K562 (cell line): ENCODE measurements at regions of chr2 and their contacts with region 1.

Region 1: GRCh38 chr2:85954590-85955458 is 66.0 kb upstream of the ST3GAL5 start:
- DNase-seq: no peak
- ATAC-seq: no peak
- H3K4me3 ChIP-seq: no peak overlapping the region
- H3K27ac ChIP-seq: no peak overlapping the region; the same call in 2 of the 3 replicates
- H3K4me1 ChIP-seq: peaks cover 22 to 24% of the 10 kb centered on the region in 2 experiments
- H3K27me3 ChIP-seq: no peaks in the 10 kb centered on the region
- CTCF ChIP-seq: no peak
- EP300 ChIP-seq: no peak
- POLR2A ChIP-seq: no peak
- RAD21 ChIP-seq: no peak

Region 2: GRCh38 chr2:85935746-85936208 is 19.0 kb before region 1 on chr2:
- CTCF ChIA-PET with region 1: no interaction called
- POLR2A ChIA-PET with region 1: no interaction called
- in situ Hi-C with region 1: no loop called
- intact Hi-C with region 1: loop called (anchors 2 kb)
- DNase-seq: peak in 1 of 4 experiments; percentile 53
- ATAC-seq: no peak
- H3K4me3 ChIP-seq: no peak overlapping the region
- H3K27ac ChIP-seq: no peak overlapping the region
- H3K4me1 ChIP-seq: peaks cover 8 to 17% of the 10 kb centered on the region in 2 experiments; a peak in 4 of 5 replicates
- H3K27me3 ChIP-seq: no peaks in the 10 kb centered on the region
- CTCF ChIP-seq: no peak
- EP300 ChIP-seq: peak; percentile 16; the same call in 1 of the 2 replicates
- POLR2A ChIP-seq: no peak
- RAD21 ChIP-seq: no peak